ENCODE measurements at regions of chr4 and their contacts with region 1.

Region 1: DNA sequence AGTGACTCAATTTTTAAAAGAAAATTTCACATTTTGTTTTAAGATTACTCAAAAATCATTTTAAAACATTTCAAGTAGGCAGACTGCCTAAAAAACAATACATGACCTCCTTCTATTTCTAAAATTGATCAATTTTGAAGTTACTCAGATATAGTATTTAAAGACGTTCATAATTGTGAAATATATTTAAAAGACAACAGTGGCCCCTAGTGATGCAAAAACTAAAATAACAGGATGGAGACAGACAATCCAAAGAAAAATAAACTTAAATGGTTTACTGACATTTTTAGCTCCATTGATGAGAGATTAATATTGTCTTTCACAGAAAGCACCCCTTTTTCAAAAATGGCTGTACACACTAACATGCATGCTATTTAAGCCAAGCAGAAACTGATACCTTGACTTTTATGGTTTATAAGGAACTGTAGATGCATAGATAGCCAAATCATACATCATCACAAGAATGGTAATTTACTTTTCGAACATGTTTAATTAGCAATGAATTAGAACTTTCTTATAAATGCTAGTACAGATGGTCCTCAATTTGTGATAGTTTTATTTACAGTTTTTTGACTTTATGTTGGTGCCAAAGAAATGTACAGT is 69.8 kb upstream of the FAT4 start:
- DNase-seq: peak; percentile 59
- H3K4me3 ChIP-seq: no peak overlapping the region
- H3K27ac ChIP-seq: no peak overlapping the region
- H3K4me1 ChIP-seq: peaks cover 11% of the 10 kb centered on the region
- H3K27me3 ChIP-seq: no peaks in the 10 kb centered on the region
- CTCF ChIP-seq: peak in 1 of 2 donors; percentile 20
- POLR2A ChIP-seq: no peak

Region 2: DNA sequence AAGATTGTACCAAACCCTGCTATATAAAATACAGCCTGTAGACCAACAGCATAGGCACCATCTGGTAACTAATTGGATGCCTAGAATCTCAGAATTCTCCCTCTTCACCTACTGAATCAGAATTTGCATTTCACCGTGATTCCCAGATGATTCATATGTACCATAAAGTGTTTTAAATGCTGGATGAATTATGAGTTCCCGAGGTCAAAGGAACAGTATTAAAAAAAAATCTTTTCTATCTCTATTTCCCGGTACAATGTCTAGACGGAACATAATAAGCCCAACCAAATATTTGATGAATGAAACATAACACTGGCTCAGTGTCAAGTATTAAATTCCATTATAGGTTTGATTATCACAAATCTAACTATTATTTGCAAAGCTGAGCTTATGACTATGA is 812.4 kb before region 1 on chr4:
- CTCF ChIA-PET with region 1: no interaction called
- POLR2A ChIA-PET with region 1: no interaction called
- dilution Hi-C with region 1: no loop called
- intact Hi-C with region 1: loop called (anchors 2 kb)
- DNase-seq: peak; percentile 94
- H3K4me3 ChIP-seq: peak overlapping the region in 1 of 3 experiments; percentile 24
- H3K27ac ChIP-seq: peak overlapping the region; percentile 100
- H3K4me1 ChIP-seq: peaks cover 75% of the 10 kb centered on the region
- H3K27me3 ChIP-seq: no peaks in the 10 kb centered on the region
- CTCF ChIP-seq: no peak
- POLR2A ChIP-seq: no peak

Region 3: DNA sequence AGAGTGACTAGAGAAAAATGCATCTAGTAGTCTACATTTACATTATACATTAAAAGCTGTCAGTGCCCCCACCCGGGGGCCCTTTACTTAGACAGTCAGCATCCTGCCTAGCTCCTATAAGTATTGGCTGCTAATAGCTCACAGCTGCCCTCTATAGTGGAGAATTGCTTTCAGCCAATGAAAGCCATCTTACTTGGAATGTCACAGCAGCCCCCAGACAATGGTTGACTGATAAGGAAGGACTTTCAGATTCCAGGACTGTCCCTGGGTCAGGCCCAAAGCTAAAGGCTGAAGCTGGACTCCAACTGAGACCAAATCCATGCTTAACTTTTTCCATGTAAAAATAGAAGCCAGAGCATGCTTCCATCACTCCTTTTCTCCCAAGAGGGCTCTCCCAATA is 729.4 kb before region 1 on chr4:
- CTCF ChIA-PET with region 1: no interaction called
- POLR2A ChIA-PET with region 1: no interaction called
- dilution Hi-C with region 1: no loop called
- intact Hi-C with region 1: loop called (anchors 10 kb)
- DNase-seq: no peak
- H3K4me3 ChIP-seq: no peak overlapping the region
- H3K27ac ChIP-seq: no peak overlapping the region
- H3K4me1 ChIP-seq: no peaks in the 10 kb centered on the region
- H3K27me3 ChIP-seq: no peaks in the 10 kb centered on the region
- CTCF ChIP-seq: no peak
- POLR2A ChIP-seq: no peak

Region 4: GRCh38 chr4:125283707-125284279 is 38.8 kb after region 1 on chr4:
- CTCF ChIA-PET with region 1: interaction called, 18 read pairs
- POLR2A ChIA-PET with region 1: no interaction called
- dilution Hi-C with region 1: no loop called
- intact Hi-C with region 1: no loop called
- DNase-seq: peak; percentile 54
- H3K4me3 ChIP-seq: no peak overlapping the region
- H3K27ac ChIP-seq: no peak overlapping the region
- H3K4me1 ChIP-seq: peaks cover 4% of the 10 kb centered on the region
- H3K27me3 ChIP-seq: no peaks in the 10 kb centered on the region
- CTCF ChIP-seq: peak; percentile 8 to 26
- POLR2A ChIP-seq: no peak

Measured in endothelial cell of umbilical vein (primary cell).